ENCODE measurements at regions of chr12 and their contacts with region 1.

Region 1: DNA sequence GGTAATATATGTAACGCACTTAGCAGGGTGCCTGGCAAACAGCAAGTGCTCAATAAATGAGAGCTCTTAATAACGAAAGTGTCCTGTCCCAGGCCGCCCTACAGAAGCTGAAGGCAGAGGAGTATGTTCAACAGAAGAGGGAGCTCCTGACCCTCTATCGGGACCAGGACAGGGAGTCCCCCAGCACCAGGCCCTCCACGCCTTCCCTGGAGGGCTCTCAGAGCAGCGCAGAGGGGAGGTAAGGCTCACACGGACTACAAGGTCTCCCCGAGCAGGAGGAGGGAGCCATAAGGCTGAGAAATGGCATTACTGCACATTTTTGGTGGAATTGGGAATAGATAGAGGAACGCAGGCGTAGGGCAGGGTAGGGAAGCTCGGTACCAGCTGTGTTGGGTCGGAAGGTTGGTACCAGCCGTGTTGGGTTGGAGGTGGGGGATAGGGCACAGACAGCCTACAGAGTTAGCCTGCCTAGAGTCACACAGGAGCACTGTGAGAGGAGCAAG is 15.5 kb downstream of the TNFRSF1A start:
- DNase-seq: no peak
- H3K4me3 ChIP-seq: peak overlapping the region in 1 of 2 donors; percentile 15
- H3K27ac ChIP-seq: peak overlapping the region; percentile 73
- H3K4me1 ChIP-seq: peaks cover 69% of the 10 kb centered on the region
- H3K27me3 ChIP-seq: no peaks in the 10 kb centered on the region
- CTCF ChIP-seq: peak in 2 of 3 experiments; percentile 54 to 58
- POLR2A ChIP-seq: no peak

Region 2: GRCh38 chr12:6383572-6384498 is 57.4 kb after region 1 on chr12 and contains the start of gene LTBR:
- intact Hi-C with region 1: loop called (anchors 2 kb)
- DNase-seq: peak in 1 of 2 donors; percentile 97
- H3K4me3 ChIP-seq: peak within 1 kb of the TSS; percentile 84 to 94
- H3K27ac ChIP-seq: peak within 1 kb of the TSS; percentile 99
- H3K4me1 ChIP-seq: peaks cover 67% of the 10 kb centered on the region
- H3K27me3 ChIP-seq: no peaks in the 10 kb centered on the region
- CTCF ChIP-seq: peak in 1 of 3 experiments; percentile 5
- POLR2A ChIP-seq: peak in 1 of 2 donors; percentile 65
- total RNA-seq, gene LTBR: 146 TPM

Region 3: DNA sequence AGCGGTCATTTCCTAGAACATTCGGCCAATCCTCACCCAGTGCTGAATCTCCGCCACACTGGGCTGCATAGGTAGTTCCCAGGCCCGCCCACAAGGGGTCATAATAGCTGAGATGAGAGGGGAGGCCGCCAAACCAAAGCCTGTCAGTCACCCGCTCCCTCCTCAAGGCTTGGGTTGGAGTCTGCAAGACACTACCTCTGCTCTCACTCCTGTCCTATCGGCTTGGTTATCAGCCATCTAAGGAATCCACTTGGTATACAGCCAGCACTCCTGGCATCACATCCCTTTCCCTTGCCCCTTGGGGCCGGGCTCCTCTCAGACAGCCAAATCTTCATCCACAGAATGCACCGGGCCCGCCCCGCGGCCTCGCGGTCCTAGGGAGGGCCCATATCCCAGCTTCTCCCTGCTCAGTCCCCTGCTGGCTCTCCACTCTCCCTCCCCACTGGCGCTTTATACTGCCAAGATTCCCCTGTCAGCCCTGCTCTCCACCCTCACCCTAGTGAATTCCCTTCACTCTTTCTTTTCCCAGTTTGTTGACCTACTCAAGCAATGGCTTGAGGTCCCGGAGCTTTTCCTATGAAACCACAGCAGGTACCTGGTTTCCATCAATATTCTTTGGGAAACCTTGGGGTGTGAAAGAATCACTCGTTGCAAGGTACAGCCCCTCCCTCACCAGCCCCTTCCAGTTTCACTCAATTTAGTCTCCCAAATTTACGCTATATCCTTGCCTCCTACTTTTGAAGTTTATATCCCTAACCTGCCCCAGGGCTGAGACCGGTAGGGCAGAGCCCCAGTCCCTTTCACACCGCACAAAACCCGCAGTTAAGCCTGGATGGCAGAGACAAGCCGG is 228.0 kb after region 1 on chr12:
- intact Hi-C with region 1: loop called (anchors 5 kb)
- DNase-seq: no peak
- H3K4me3 ChIP-seq: peak overlapping the region; percentile 61 to 75
- H3K27ac ChIP-seq: peak overlapping the region; percentile 86
- H3K4me1 ChIP-seq: peaks cover 60% of the 10 kb centered on the region
- H3K27me3 ChIP-seq: no peaks in the 10 kb centered on the region
- CTCF ChIP-seq: peak in 2 of 3 experiments; percentile 16 to 46
- POLR2A ChIP-seq: no peak